Uterus (tissue), 4 donors: ENCODE measurements at regions of chr4 and their contacts with region 1.

Region 1: DNA sequence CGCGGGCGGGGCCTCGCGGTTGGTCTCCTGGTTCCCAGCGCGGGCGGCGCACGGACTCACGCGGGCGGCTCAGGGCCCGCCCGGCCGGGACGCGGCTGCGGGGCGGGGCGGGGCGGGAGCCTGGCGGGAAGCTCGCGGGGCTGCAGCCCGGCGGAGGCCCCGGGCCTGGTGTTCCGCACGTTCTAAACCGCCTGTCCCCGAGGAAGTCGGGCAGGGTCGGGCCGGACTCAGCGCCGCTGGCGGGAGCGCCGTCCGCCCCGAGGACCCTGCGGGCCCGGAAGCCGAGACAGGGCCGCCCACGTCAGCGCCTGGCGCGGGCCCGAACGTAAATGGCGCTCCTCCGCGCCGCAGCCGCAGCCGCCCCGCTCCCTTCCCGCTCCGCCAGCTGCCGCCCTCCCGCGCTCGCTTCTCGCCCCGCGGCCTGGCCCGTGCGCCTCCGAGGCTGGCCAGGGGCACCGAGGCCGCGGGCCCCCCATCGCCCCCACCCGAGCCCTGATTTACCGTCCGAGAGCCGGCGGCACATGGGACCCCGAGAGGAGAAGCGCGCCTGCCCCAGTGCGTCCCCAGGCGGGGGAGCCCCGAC is 309 bp upstream of the CTBP1 start:
- DNase-seq: peak; percentile 80 to 84
- H3K4me3 ChIP-seq: peak overlapping the region; percentile 39 to 70
- H3K27ac ChIP-seq: peak overlapping the region; percentile 95 to 98
- H3K4me1 ChIP-seq: peaks cover 8 to 38% of the 10 kb centered on the region in 2 donors
- H3K27me3 ChIP-seq: no peaks in the 10 kb centered on the region
- CTCF ChIP-seq: no peak
- POLR2A ChIP-seq: peak in 1 of 2 donors; percentile 63

Region 2: DNA sequence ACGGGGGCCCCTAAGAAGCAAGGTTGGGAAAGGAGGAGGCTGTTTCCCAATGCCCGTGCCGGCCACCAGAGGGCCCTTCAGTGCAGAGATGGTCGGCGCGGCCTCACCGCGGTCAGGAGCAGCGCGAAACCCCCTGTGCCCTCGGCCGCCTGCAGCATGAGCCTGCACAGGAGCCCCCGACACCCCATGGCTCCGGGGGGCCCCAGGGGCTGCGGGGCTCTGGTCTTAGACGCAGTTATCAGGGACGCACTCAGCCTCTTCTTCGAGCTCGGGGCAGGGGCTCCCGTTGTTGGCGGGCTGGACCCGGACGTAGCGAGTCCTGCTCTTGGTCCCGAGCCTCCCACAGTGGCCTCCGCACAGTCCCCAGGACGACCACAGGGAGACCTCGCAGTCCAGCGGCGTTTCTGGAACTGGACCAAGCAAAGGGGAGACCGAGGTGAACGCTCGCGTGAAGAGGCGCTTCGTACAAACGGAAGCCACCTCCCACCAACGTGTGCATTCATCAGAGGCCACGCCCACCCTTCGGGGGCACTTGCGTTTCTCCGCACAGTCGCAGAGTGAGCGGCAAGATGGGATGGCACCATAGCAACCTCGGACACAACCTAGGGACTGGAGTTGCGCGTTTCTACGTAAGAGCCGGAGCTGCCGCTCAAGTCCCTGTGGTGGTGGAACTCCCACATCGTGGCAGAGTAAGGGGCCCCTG is 81.8 kb before region 1 on chr4:
- intact Hi-C with region 1: loop called (anchors 5 kb)
- DNase-seq: peak; percentile 82 to 86
- H3K4me3 ChIP-seq: peak overlapping the region; percentile 30 to 34
- H3K27ac ChIP-seq: peak overlapping the region; percentile 53 to 94
- H3K4me1 ChIP-seq: peaks cover 0 to 15% of the 10 kb centered on the region in 2 donors
- H3K27me3 ChIP-seq: no peaks in the 10 kb centered on the region
- CTCF ChIP-seq: peak; percentile 87 to 94 (median 92)
- POLR2A ChIP-seq: peak in 1 of 2 donors; percentile 20

Region 3: GRCh38 chr4:1209821-1210210 is 39.4 kb before region 1 on chr4:
- intact Hi-C with region 1: loop called (anchors 5 kb)
- DNase-seq: peak; percentile 90 to 93
- H3K4me3 ChIP-seq: no peak overlapping the region
- H3K27ac ChIP-seq: peak overlapping the region; percentile 88 to 93
- H3K4me1 ChIP-seq: peaks cover 22 to 59% of the 10 kb centered on the region in 2 donors
- H3K27me3 ChIP-seq: no peaks in the 10 kb centered on the region
- CTCF ChIP-seq: no peak
- POLR2A ChIP-seq: peak in 1 of 2 donors; percentile 10

Region 4: DNA sequence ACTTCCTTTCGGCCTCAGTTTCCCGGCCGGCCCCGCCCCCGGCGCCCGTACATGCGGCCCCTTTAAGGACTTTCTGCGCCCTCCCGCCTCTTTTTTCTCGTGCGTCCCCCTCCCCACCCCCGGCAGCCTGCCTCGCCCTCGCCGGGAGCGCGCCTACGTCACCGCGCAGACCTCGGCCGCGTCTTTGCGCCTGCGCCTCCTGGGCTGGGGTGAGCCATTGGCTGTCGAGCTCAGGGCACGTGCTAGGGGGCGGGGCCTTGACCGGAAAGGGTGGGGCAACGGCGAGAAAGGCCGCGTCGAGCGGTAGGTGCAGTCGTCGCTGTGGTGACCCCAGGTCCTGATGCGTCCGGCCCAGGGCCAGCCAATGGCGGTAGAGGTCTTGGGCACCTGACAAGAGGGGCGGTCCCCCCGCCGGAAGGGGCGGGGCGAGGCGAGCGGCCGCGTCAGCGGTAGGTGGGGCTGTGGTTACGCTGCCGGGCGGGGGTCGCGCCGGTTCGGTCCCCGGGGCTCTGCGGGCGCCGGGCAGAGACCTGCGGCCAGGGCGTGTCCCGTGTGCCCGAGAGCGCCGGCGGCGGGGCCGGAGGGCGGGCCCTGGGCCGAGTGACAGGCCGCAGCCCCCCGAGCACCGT is 97.7 kb after region 1 on chr4 and contains the start of gene UVSSA:
- intact Hi-C with region 1: loop called (anchors 5 kb)
- DNase-seq: peak; percentile 100
- H3K4me3 ChIP-seq: peak within 1 kb of the TSS; percentile 66 to 95
- H3K27ac ChIP-seq: peak within 1 kb of the TSS; percentile 94 to 100
- H3K4me1 ChIP-seq: peaks cover 0 to 9% of the 10 kb centered on the region in 2 donors
- H3K27me3 ChIP-seq: no peaks in the 10 kb centered on the region
- CTCF ChIP-seq: peak in 2 of 4 experiments; percentile 10 to 16
- POLR2A ChIP-seq: peak; percentile 80 to 99
- total RNA-seq, gene UVSSA: 13.1 to 37.2 (median 19.3) TPM